Left colon (tissue), 2 donors: ENCODE measurements at regions of chr1 and their contacts with region 1.

Region 1: GRCh38 chr1:83931658-83932253 is 67.2 kb downstream of the TTLL7 start:
- DNase-seq: no peak
- ATAC-seq: peak; percentile 66

Region 2: DNA sequence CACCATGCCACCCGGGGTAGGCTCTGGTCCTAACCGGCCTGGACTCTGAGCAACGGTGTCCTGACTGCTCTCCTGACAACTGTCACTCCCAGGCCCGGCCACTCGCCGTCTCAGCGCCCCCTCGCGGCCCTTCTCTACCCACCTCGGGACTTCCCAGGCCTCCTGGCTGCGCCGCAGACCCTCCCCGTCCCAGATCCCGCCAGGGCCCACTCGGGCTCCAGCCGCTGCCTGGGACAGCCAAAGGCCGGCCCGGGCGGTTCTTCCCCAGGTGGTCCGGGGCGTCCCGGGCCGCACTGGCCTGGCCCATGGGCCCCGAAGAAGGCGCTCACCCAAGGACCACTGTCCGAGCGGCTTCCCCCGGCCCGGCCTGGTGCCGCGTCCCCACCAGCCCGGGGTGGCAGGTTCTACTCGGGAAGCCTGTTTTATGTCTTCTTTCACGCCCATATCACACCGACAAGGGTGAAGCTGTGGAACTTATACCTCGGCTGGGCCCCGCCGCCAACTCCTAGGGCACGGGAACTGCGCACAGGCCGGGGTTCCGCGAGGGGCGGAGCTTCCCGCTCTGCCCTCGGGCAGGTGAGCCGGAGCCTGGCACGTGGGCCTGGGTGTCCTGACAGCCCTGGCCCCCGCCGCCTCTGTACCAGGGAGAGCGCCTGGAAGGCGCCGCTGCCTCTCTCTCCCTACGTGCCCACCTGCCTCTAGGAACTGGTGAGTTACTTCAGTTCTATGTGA is 71.1 kb before region 1 on chr1:
- intact Hi-C with region 1: no loop called
- DNase-seq: peak; percentile 80 to 91
- ATAC-seq: peak; percentile 98

Region 3: DNA sequence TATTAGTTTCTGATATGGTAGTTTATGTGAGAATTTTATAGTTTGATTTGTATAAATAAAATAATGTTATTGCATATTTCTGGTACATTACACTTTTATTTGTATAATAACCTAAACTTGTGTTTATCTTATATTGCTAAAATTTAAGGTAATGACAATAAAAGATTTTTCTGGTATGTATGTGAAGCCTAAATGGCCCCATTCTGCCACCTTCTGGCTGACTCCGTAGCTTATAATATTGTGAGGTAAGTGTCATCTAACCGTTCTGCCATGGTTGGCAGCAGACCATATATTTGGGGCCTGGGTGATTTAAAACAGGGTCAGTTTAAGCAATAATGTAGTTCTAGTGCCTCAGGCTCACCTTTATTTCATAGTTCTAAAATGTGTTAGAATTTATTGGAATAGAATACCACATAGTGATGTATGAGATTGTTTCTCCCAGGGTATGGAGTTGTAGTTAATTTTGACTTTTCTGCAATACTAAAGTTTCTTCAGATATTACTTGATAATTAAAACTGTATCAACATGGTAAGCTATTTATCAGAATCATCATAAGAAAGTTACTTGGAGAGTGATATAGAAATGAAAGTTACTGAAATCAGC is 191.1 kb after region 1 on chr1:
- intact Hi-C with region 1: loop called in 1 of 2 experiments (anchors 5 kb)
- DNase-seq: peak; percentile 30 to 67
- ATAC-seq: peak; percentile 76